Tibial artery (tissue), 4 donors: ENCODE measurements at regions of chrX and their contacts with region 1.

Region 1: DNA sequence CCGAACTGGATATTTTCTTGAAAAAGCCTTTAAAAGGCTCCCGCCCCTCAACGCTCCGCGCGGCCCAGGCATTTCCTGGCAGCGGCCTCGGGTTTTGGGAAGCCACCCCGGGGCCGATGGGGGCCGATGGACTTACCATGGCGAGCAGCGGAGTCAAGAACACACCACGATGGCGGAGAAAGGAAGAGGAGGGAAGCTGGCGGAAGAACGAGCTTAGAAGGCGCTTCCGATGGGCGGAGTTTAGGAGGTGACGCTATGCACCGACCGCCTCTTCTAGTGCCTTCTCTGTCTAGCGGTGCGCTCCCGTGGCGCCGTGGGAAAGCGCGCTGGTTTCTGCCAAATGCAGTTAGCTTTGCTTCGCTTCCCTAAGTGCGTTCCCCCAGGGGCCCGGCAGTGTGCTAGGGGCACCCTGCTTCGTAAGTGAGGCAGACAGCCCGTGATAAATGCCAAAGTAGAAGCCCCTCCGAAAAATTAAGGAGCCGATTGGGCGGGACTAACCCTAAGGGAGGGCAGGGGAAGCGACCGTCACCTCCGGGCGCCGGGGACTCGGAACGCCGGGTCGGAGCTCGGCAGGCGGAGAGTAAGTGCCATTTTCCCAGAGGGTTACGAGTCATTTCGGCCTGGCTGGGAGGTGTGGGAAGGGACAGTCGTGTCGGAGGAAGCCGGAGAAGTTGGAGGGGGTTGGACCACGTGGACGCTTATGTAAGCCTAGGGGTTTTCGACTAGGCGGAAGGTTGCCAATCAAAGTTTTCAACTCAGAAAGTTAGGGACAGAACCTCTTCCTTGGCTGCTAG is at the start of gene RPL39:
- DNase-seq: peak; percentile 78 to 90
- H3K4me3 ChIP-seq: peak within 1 kb of the TSS; percentile 70 to 79
- H3K27ac ChIP-seq: peak within 1 kb of the TSS; percentile 90 to 92
- H3K4me1 ChIP-seq: peaks cover 0 to 22% (median 3%) of the 10 kb centered on the region in 4 donors
- H3K27me3 ChIP-seq: no peaks in the 10 kb centered on the region
- CTCF ChIP-seq: no peak

Region 2: DNA sequence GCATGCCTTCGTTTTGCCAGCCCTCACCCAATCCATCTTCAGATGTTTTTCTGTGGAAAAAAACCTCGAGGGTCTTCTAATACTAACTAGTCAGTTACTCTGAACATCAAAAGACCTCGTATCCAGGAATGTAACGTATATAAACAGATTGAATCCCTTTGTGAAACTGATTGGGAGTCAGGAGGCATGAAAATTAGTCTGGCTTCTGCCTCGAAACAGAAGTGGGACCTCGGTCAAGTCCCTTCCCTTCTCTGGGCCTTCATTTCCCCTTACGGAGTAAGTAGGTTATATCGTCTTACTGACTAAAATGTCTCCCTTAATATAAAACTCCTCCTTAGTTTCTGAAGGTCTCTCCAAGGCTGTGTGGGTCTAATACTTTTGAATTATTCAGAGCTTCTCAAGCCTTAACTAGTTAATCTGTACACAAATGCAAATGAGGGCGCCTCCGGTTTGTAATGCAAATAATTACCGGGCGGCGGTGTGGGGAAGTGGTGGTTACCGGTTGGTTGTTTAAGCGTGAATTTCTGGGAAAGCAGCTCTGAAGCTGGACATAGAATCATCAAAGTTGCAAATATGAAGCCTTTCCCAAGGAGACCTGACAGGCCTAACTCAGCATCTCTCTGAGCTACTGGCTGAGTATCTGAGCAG is 174.0 kb before region 1 on chrX:
- intact Hi-C with region 1: loop called (anchors 5 kb)
- DNase-seq: no peak
- H3K4me3 ChIP-seq: no peak overlapping the region
- H3K27ac ChIP-seq: no peak overlapping the region
- H3K4me1 ChIP-seq: no peaks in the 10 kb centered on the region
- H3K27me3 ChIP-seq: no peaks in the 10 kb centered on the region
- CTCF ChIP-seq: no peak

Region 3: GRCh38 chrX:119852382-119853353 is 61.0 kb after region 1 on chrX and contains the start of gene UPF3B:
- intact Hi-C with region 1: loop called (anchors 5 kb)
- DNase-seq: peak; percentile 97 to 98
- H3K4me3 ChIP-seq: peak within 1 kb of the TSS; percentile 73
- H3K27ac ChIP-seq: peak within 1 kb of the TSS; percentile 89 to 92
- H3K4me1 ChIP-seq: peaks cover 0 to 2% (median 0%) of the 10 kb centered on the region in 4 donors
- H3K27me3 ChIP-seq: no peaks in the 10 kb centered on the region
- CTCF ChIP-seq: no peak

Region 4: GRCh38 chrX:120419463-120419862 is 627.8 kb after region 1 on chrX:
- intact Hi-C with region 1: no loop called
- DNase-seq: no peak
- H3K4me3 ChIP-seq: no peak overlapping the region
- H3K27ac ChIP-seq: no peak overlapping the region
- H3K4me1 ChIP-seq: no peaks in the 10 kb centered on the region
- H3K27me3 ChIP-seq: no peaks in the 10 kb centered on the region
- CTCF ChIP-seq: no peak

Region 5: GRCh38 chrX:120468825-120469525 is 677.3 kb after region 1 on chrX and contains the start of gene LAMP2:
- intact Hi-C with region 1: loop called (anchors 5 kb)
- DNase-seq: peak; percentile 89 to 94
- H3K4me3 ChIP-seq: peak within 1 kb of the TSS; percentile 63 to 73
- H3K27ac ChIP-seq: peak within 1 kb of the TSS; percentile 85 to 92
- H3K4me1 ChIP-seq: peaks cover 0 to 20% (median 3%) of the 10 kb centered on the region in 4 donors
- H3K27me3 ChIP-seq: no peaks in the 10 kb centered on the region
- CTCF ChIP-seq: no peak